ENCODE measurements at regions of chr16 and their contacts with region 1.

Region 1: DNA sequence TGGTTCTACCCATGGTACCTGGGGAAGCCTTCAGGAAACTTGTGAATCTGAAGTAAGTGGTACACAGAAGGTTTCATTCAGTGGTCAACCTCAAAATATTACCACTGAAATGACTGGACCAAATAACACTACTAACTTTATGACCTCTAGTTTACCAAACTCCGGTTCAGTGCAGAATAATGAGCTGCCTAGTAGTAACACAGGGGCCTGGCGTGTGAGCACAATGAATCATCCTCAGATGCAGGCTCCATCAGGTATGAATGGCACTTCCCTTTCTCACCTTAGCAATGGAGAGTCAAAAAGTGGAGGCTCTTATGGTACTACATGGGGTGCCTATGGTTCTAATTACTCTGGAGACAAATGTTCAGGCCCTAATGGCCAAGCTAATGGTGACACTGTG is 55.9 kb upstream of the SLC5A11 start:
- DNase-seq: no peak
- ATAC-seq: no peak
- H3K4me3 ChIP-seq: no peak overlapping the region
- H3K27ac ChIP-seq: no peak overlapping the region
- H3K4me1 ChIP-seq: no peaks in the 10 kb centered on the region
- H3K27me3 ChIP-seq: no peaks in the 10 kb centered on the region
- CTCF ChIP-seq: no peak
- POLR2A ChIP-seq: no peak

Region 2: DNA sequence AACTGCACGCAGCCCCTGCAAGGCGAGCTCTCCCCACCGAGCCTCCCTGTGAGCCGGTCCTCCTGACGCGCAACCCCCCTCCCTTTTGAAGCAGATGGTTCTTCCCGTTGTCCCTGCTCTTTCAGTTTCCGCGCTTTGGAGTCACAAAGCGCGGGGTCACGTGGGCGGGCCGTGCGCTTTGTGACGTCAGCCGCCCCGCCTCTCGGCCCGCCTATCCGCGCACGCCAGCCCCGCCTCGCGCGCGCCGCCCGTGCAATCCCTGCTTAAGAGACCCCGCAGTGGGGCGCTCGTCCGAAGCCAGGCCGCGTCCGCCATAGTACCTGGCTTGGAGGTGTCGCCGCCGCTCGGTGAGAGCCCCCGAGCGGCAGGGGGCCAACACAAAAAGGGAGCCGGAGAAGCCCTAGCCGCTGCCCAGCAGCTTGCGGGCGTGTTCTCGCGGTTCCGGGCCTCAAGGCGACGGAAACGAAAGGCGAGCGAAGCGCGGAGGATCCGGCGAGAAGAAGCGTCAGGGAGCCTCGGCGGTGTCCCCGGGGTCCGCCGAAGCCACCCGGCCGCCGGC is 250.5 kb before region 1 on chr16 and contains the start of gene RBBP6:
- intact Hi-C with region 1: no loop called
- DNase-seq: peak; percentile 95 to 96 (median 96)
- ATAC-seq: peak; percentile 93
- H3K4me3 ChIP-seq: peak within 1 kb of the TSS; percentile 66 to 98
- H3K27ac ChIP-seq: peak within 1 kb of the TSS; percentile 98 to 100 (median 100)
- H3K4me1 ChIP-seq: peaks cover 35% of the 10 kb centered on the region
- H3K27me3 ChIP-seq: no peaks in the 10 kb centered on the region
- CTCF ChIP-seq: peak in 4 of 7 experiments; percentile 14 to 45 (median 35)
- POLR2A ChIP-seq: peak; percentile 99
- total RNA-seq, gene RBBP6: 31.1 to 63.0 TPM

Region 3: DNA sequence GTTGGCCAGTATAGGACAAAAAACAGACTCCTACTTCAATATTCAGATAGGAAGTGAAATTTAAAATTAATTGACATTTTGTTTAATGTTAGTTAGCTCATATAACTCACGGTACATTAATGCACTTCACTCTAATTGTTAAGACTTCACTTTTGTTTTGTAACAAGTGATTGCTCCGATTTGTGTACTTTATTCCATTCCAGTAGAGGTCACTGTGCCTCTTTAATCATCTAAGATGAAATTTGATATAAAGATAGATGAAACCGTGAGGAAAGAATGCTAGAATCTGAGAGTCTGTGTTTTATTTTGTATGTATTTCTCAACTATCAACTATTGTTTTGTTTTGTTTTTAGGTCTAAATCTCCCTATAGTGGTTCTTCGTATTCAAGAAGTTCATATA is 221.5 kb before region 1 on chr16:
- intact Hi-C with region 1: loop called (anchors 10 kb)
- DNase-seq: no peak
- ATAC-seq: no peak
- H3K4me3 ChIP-seq: no peak overlapping the region
- H3K27ac ChIP-seq: no peak overlapping the region
- H3K4me1 ChIP-seq: no peaks in the 10 kb centered on the region
- H3K27me3 ChIP-seq: no peaks in the 10 kb centered on the region
- CTCF ChIP-seq: peak in 4 of 7 experiments; percentile 11 to 28 (median 22)
- POLR2A ChIP-seq: no peak